Breast epithelium (tissue), 4 donors: ENCODE measurements at regions of chr5 and their contacts with region 1.

Region 1: DNA sequence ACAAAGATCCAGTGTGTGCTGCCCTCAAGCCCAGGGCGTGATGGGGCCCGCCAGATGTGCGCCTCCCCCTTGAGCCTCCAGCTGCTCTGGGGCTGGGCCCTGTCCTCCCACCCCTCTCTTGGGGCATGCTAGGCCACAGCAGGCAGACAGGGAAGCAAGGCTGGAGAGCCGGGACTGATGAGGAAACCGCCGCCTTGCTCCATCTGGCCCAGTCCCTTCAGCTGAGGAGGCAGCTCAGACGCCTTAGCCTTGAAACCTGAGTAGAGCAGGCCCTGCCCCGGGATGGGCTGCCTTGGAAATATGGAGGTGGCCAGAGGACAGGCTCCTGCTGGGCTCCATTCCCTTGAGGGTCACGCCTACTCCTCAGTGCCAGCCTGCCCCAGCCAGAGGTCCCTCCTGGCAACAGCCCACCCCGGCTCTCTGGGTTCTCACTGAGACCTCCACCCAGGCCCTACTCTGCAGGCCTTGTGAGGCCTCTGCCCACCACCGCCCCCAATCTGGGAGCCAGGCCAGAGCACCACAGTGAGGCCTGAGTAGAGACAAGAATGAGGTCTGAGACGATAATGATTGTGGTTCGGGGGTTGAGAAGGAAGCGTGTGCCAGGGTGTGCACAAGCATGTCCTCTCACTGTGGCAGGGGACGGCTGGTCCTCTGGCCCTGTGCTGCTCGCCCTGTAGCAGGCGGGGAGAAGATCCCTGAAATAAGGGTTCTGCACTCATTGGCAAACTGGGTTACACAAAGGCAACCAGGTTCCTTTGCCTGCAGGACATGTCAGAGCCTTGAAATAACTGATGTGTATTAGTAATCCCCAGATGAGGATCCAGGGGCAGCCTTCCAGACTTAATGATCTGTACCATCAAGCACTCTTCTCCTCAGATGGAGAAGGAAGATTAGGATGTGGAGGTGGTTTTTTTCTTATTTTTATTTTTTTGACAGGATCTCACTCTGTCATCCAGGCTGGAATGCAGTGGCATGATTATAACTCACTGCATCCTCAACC is 30.9 kb downstream of the CXXC5 start:
- DNase-seq: no peak
- H3K4me3 ChIP-seq: no peak overlapping the region
- H3K27ac ChIP-seq: peak overlapping the region; percentile 82 to 97
- H3K4me1 ChIP-seq: peaks cover 12 to 13% of the 10 kb centered on the region in 2 donors
- H3K27me3 ChIP-seq: no peaks in the 10 kb centered on the region
- CTCF ChIP-seq: no peak
- POLR2A ChIP-seq: no peak

Region 2: DNA sequence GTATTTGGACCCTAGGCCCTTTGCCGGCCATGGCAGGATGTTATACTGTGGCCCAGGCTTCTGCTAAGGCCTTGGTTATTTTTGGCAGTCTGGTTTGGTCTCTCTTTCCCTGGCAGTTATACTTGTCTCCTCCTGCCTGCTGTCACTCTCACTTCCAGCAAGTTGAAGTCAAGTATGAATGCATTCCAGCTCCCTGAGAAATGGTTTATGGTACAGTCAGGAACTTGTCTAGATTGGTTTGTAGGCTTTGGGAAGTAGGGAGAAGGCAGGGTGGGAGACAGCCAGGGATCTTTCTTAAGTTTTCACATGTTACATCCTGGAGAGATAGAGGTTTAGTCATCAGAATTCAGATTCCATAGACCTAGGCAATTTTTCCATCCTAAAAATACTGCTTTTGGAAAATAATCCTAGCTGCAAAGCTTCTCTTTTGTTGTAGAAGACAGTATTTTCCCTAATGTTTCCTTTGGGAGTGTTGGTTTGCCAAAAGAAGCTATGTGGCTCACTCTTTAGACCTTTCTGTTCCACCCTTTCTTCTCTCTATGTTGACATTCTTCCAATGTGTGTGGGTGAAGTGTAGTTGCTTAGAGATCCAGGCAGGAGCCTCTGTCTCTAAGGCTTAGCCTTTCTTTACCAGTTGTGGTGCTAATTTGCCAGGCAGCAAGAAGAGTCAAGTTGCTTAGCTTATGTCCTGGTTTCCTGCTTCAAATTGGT is 1329.0 kb before region 1 on chr5:
- intact Hi-C with region 1: loop called (anchors 5 kb)
- DNase-seq: no peak
- H3K4me3 ChIP-seq: no peak overlapping the region
- H3K27ac ChIP-seq: peak overlapping the region in 1 of 2 donors; percentile 10
- H3K4me1 ChIP-seq: no peaks in the 10 kb centered on the region
- H3K27me3 ChIP-seq: no peaks in the 10 kb centered on the region
- CTCF ChIP-seq: no peak
- POLR2A ChIP-seq: no peak

Region 3: GRCh38 chr5:139341650-139342422 is 337.2 kb before region 1 on chr5 and contains the start of gene PAIP2:
- intact Hi-C with region 1: no loop called
- DNase-seq: peak; percentile 97 to 98
- H3K4me3 ChIP-seq: peak within 1 kb of the TSS; percentile 74 to 99 (median 95)
- H3K27ac ChIP-seq: peak within 1 kb of the TSS; percentile 98 to 100
- H3K4me1 ChIP-seq: peaks cover 0 to 4% of the 10 kb centered on the region in 2 donors
- H3K27me3 ChIP-seq: no peaks in the 10 kb centered on the region
- CTCF ChIP-seq: peak; percentile 51 to 86 (median 57)
- POLR2A ChIP-seq: peak; percentile 93
- total RNA-seq, gene PAIP2: 86.3 to 95.4 (median 95.0) TPM